T-cell (primary cell): ENCODE measurements at regions of chr16 and their contacts with region 1.

Region 1: GRCh38 chr16:31458844-31459721 is at the start of gene ARMC5:
- DNase-seq: peak; percentile 92 to 99 (median 95)
- ATAC-seq: peak; percentile 76 to 79 (median 78)
- H3K4me3 ChIP-seq: peak within 1 kb of the TSS; percentile 81 to 88
- H3K4me3 Mint-ChIP-seq: peak within 1 kb of the TSS; percentile 87 to 90 (median 89)
- H3K27ac ChIP-seq: peak within 1 kb of the TSS; percentile 97
- H3K27ac Mint-ChIP-seq: peak within 1 kb of the TSS; percentile 97 to 99
- H3K4me1 ChIP-seq: peaks cover 21 to 60% of the 10 kb centered on the region in 2 experiments
- H3K4me1 Mint-ChIP-seq: peaks cover 36 to 48% (median 46%) of the 10 kb centered on the region in 3 donors
- H3K27me3 ChIP-seq: no peaks in the 10 kb centered on the region
- H3K27me3 Mint-ChIP-seq: no peaks in the 10 kb centered on the region
- total RNA-seq, gene ARMC5: 9.3 to 16.6 (median 10.2) TPM

Region 2: GRCh38 chr16:31286421-31287032 is 172.6 kb before region 1 on chr16:
- CTCF ChIA-PET with region 1: no interaction called
- POLR2A ChIA-PET with region 1: no interaction called
- DNase-seq: no peak
- ATAC-seq: no peak
- H3K4me3 ChIP-seq: no peak overlapping the region
- H3K4me3 Mint-ChIP-seq: peak overlapping the region in 1 of 3 donors; percentile 28
- H3K27ac ChIP-seq: no peak overlapping the region
- H3K27ac Mint-ChIP-seq: no peak overlapping the region
- H3K4me1 ChIP-seq: peaks cover 0 to 7% of the 10 kb centered on the region in 2 experiments
- H3K4me1 Mint-ChIP-seq: peaks cover 0 to 21% (median 8%) of the 10 kb centered on the region in 3 donors
- H3K27me3 ChIP-seq: peaks cover 0 to 4% of the 10 kb centered on the region in 2 experiments
- H3K27me3 Mint-ChIP-seq: peaks cover 13 to 19% of the 10 kb centered on the region in 2 donors

Region 3: GRCh38 chr16:31404353-31405064 is 54.6 kb before region 1 on chr16:
- CTCF ChIA-PET with region 1: no interaction called
- POLR2A ChIA-PET with region 1: no interaction called
- DNase-seq: no peak
- ATAC-seq: no peak
- H3K4me3 ChIP-seq: no peak overlapping the region
- H3K4me3 Mint-ChIP-seq: no peak overlapping the region
- H3K27ac ChIP-seq: no peak overlapping the region
- H3K27ac Mint-ChIP-seq: no peak overlapping the region
- H3K4me1 ChIP-seq: peaks cover 0 to 38% of the 10 kb centered on the region in 2 experiments
- H3K4me1 Mint-ChIP-seq: peaks cover 7 to 13% (median 11%) of the 10 kb centered on the region in 3 donors
- H3K27me3 ChIP-seq: peaks cover 0 to 11% of the 10 kb centered on the region in 2 experiments
- H3K27me3 Mint-ChIP-seq: peaks cover 5% of the 10 kb centered on the region in 2 donors

Region 4: DNA sequence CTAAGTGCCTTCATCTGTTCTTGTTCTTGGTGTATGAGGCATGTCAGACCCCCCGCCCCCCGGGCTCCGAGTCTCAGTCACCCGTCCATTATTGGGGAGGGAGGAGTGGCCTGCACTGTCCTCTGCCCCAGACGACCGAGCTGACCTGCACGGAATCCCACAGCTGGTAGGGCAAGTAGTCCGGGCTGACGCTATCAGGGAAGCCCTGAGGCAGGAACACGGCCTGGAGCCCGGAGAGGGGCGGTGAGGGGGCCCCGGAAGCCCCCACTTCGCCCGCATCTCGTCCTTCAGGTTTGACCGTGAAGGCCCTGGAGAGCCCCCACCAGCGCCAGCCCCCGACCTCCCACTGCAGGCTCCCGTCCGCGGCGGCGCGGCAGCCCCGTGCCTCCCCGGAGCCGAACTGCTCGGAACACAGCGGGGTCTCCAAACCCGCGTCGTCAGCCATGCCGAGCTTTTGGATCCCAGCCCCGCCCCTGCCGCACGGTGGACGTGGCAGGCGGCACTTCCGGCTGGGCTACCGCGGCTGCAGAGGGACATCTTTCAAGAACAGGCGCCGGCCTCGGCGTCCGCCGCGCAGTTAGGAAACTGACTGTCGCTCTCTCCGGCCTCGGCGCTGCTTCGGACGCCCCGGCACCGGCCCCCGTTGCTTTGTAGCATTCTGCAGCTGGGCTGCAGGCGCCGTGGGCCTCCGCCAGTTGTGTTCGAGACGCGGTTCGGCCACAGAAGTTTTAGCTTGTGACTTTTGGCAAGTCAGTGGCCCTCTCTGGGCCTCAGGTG is 49.0 kb after region 1 on chr16 and contains the start of gene RUSF1:
- CTCF ChIA-PET with region 1: interaction called in 1 of 2 experiments, 15 read pairs
- POLR2A ChIA-PET with region 1: interaction called, 3 to 4 read pairs
- DNase-seq: peak; percentile 59 to 86 (median 74)
- ATAC-seq: peak; percentile 90 to 93 (median 92)
- H3K4me3 ChIP-seq: peak within 1 kb of the TSS; percentile 73 to 95
- H3K4me3 Mint-ChIP-seq: peak within 1 kb of the TSS; percentile 92 to 95 (median 95)
- H3K27ac ChIP-seq: peak within 1 kb of the TSS; percentile 93
- H3K27ac Mint-ChIP-seq: peak within 1 kb of the TSS; percentile 97 to 98
- H3K4me1 ChIP-seq: peaks cover 6 to 37% of the 10 kb centered on the region in 2 experiments
- H3K4me1 Mint-ChIP-seq: peaks cover 48 to 55% (median 54%) of the 10 kb centered on the region in 3 donors
- H3K27me3 ChIP-seq: no peaks in the 10 kb centered on the region
- H3K27me3 Mint-ChIP-seq: no peaks in the 10 kb centered on the region
- total RNA-seq, gene RUSF1: 65.4 to 125 (median 107) TPM

Region 5: DNA sequence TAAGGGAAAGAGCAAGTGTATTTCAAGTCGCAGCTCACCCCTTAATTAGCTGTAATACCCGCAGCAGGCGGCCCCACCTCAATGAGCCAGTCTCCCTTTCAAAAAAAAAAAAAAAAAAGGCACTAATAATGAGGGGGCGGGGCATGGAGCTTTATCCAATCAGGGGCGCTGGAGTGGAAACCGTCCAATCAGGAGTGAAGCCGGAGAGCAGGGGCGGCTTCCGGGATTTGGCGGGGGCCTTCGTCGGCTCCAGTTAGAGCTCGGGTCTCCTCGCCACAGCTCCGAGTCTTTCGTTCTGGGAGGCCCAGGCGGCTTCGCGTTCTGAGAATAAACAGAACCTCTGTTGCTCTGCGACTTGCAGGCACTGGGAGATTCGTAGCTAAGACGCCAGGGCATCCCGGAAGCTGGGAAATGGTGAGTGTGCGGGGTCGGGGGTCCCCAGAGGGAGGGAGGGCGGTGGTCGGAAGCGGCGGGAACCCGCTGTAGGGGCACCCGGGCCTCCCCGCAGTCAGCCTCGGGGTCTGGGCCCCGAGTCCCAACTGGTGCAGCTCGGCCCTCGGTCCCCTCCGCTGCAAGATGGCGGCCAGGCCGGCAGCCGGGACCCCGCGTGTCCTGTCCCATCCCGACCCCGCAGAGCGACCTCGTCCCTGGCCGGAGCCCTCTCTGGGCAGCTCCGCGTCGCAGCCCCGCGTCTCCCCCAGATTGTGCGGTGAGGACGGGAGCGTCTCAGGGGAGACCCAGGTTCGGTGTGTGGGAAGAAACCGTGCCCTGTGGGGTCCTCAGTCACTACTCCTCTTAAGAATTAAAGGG is 414.7 kb after region 1 on chr16 and contains the start of gene ZNF267:
- CTCF ChIA-PET with region 1: interaction called in 1 of 2 experiments, 10 read pairs
- POLR2A ChIA-PET with region 1: interaction called in 1 of 2 experiments, 14 read pairs
- DNase-seq: peak; percentile 83 to 95 (median 92)
- ATAC-seq: peak; percentile 71 to 73 (median 71)
- H3K4me3 ChIP-seq: peak within 1 kb of the TSS; percentile 93 to 97
- H3K4me3 Mint-ChIP-seq: peak within 1 kb of the TSS; percentile 92 to 96 (median 96)
- H3K27ac ChIP-seq: peak within 1 kb of the TSS; percentile 90
- H3K27ac Mint-ChIP-seq: peak within 1 kb of the TSS; percentile 97
- H3K4me1 ChIP-seq: peaks cover 52 to 72% of the 10 kb centered on the region in 2 experiments
- H3K4me1 Mint-ChIP-seq: peaks cover 72 to 85% (median 84%) of the 10 kb centered on the region in 3 donors
- H3K27me3 ChIP-seq: no peaks in the 10 kb centered on the region
- H3K27me3 Mint-ChIP-seq: no peaks in the 10 kb centered on the region
- total RNA-seq, gene ZNF267: 35.0 to 46.9 (median 43.5) TPM